Activated CD4-positive, alpha-beta T cell treated with anti-CD3 and anti-CD28 coated beads for 36 hours (primary cell): ENCODE measurements at regions of chr1 and their contacts with region 1.

Region 1: DNA sequence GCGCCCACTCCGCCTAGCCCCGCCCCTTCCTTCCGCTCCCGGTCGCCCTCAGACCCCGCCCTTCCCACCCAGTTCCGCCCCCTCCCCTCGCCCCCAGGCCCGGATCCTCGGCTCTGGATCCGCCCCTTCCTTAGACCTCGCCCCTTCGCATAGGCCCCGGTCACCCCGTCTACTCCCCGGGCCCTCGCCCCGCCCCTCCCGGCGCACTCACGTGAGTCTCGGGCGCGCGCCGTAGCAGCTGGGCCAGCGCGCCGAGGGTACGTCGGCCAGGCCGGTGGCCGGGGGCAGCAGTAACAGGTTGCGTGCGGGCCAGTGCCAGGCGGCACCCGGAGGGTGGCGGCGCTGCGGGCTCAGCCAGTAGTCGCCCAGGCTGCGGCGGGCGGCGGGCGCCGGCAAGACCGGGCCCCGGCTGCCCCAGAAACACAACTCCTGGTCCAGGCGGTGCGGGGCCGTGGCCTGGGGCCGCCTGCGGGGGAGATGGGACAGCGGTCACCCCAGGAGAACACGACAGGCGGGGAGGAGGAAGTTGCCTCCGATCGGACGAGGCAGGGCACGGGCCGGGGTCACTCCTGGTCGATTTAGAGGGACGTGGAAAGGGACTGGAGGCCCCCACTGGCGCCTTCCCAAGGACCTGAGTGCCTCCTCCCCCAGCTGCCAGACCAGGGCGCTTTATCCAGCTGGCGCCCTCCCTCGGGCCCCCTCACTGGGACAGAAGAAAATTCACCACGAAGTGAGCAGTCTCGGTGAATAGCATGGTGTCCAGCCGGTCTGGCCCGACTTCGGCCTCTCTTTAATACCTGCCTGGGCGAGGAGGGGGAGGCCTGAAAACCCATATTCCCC is 10.7 kb downstream of the FAM229A start:
- DNase-seq: peak; percentile 96
- ATAC-seq: peak; percentile 96
- H3K4me3 Mint-ChIP-seq: peak overlapping the region; percentile 73
- H3K27ac Mint-ChIP-seq: peak overlapping the region; percentile 82
- H3K4me1 Mint-ChIP-seq: peaks cover 20% of the 10 kb centered on the region
- H3K27me3 Mint-ChIP-seq: no peaks in the 10 kb centered on the region

Region 2: DNA sequence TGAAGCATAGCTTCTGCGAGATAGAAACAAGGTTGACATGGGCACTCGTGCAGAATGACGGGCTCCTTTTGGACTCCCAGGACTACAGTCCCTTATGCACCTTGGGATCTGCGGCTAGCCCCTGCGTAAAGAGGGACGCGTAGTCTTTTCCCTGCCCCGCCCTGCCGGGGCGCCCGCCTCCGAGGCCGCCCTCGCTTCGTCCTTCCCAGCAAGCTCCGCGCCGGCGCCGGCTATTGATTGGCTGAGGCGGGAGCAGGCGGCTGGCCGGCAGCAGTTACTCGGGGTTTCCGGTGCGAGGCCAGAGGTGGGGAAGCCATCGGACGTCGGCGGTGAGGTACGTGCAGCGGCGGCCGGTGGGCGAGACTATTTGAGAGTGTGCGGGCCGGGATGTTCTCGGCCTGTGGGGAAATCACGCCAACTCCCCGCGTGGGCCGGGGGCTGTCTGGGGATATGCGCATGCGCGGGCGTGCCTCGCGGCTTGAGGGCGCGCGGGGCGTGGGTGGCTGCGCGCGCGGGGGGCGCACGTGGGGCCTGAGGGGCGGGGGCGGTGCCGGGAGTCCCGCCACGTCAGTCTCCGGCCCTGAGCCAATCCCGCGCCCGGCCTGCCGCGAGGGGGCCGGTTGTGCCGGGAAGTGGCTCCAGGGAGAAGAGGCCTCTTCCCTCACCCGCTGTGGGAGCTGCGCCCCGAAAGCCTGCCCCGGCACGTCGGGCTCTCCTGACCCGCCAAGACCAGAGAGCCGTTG is 172.0 kb before region 1 on chr1 and contains the start of gene TXLNA:
- CTCF ChIA-PET with region 1: no interaction called
- POLR2A ChIA-PET with region 1: no interaction called
- intact Hi-C with region 1: loop called in 1 of 2 experiments (anchors 1 kb)
- DNase-seq: peak; percentile 96
- ATAC-seq: peak; percentile 93
- H3K4me3 Mint-ChIP-seq: peak within 1 kb of the TSS; percentile 86
- H3K27ac Mint-ChIP-seq: peak within 1 kb of the TSS; percentile 98
- H3K4me1 Mint-ChIP-seq: peaks cover 44% of the 10 kb centered on the region
- H3K27me3 Mint-ChIP-seq: no peaks in the 10 kb centered on the region
- total RNA-seq, gene TXLNA: 79.5 to 79.7 TPM

Region 3: DNA sequence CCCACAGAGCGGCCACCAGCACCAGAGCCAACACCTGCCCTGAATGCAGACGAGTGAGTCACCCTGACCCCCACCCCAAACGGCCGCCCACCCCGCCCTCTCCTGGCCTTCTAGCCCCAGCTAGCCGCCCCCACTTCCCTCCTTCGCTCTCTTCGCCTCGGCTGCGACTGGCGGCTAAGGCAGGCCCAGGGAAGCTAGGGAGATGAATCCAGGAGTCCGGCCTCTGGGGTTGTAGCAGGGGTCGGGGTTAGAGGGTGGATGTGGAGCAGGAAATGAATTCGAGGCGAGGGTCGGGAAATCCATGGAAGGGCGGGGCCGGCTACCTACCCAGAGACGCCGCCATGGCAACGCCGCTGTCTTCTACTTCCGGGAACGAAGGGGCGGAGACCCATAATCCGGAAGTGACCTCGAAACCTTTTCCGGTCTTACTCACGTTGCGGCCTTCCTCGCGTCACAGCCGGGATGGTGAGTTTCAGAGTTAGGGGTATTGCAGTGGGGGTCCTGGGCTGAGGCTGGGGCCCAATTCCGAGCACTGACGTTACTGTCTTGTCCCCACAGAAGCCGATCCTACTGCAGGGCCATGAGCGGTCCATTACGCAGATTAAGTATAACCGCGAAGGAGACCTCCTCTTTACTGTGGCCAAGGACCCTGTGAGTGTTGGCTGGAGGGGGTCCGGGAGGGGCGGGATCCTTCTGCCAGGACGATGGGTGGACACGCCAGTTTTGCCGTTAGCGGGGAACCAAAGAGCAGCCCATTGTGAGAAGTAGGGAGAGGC is 129.5 kb before region 1 on chr1 and contains the starts of genes EIF3I and TMEM234:
- CTCF ChIA-PET with region 1: no interaction called
- POLR2A ChIA-PET with region 1: no interaction called
- intact Hi-C with region 1: loop called (anchors 1 to 2 kb)
- DNase-seq: peak; percentile 95
- ATAC-seq: peak; percentile 95
- H3K4me3 Mint-ChIP-seq: peak within 1 kb of the TSS; percentile 96
- H3K27ac Mint-ChIP-seq: peak within 1 kb of the TSS; percentile 97
- H3K4me1 Mint-ChIP-seq: peaks cover 29% of the 10 kb centered on the region
- H3K27me3 Mint-ChIP-seq: no peaks in the 10 kb centered on the region
- total RNA-seq, gene EIF3I: 299 to 349 TPM
- total RNA-seq, gene TMEM234: 7.3 to 8.2 TPM

Region 4: GRCh38 chr1:32291708-32292492 is 59.7 kb before region 1 on chr1 and contains the start of gene HDAC1:
- CTCF ChIA-PET with region 1: interaction called, 4 read pairs
- POLR2A ChIA-PET with region 1: no interaction called
- intact Hi-C with region 1: loop called in 1 of 2 experiments (anchors 1 kb)
- DNase-seq: peak; percentile 99
- ATAC-seq: peak; percentile 98
- H3K4me3 Mint-ChIP-seq: peak within 1 kb of the TSS; percentile 100
- H3K27ac Mint-ChIP-seq: peak within 1 kb of the TSS; percentile 99
- H3K4me1 Mint-ChIP-seq: peaks cover 43% of the 10 kb centered on the region
- H3K27me3 Mint-ChIP-seq: no peaks in the 10 kb centered on the region
- total RNA-seq, gene HDAC1: 132 to 146 TPM

Region 5: DNA sequence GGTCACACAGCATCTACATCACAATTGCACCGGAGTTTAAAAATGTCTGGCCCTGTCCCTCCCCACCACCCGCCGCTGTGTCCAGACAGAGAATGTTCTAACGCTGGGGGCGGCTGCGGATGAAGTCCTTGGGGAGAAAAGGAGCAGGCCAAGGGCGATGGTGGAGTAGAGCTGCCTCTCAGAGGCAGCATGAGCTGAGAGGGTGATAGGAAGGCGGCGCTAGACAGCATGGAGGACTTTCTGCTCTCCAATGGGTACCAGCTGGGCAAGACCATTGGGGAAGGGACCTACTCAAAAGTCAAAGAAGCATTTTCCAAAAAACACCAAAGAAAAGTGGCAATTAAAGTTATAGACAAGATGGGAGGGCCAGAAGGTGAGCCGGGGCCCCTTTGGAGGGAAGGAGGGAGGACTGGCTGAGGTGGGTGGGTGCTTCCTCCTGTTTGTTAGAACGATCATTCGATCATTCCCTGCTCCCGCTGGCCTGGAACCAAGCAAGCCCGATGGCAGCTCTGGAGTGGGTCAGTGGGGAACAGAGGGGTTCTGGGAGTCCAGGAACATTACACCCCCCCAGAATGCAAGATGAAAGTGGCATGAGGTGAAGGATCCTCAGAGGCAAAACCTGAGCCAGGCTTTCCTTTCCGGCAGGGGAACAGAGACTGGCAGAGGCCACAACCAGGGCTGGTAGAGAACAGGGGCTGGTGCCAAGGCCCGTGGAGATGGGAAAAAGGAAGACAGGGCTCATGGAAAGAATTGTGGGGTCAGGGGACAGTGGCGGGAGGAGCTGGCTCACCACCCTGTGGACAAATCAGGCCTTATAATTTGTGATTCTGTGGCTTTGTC is 11.1 kb after region 1 on chr1 and contains the starts of genes FAM229A and TSSK3:
- CTCF ChIA-PET with region 1: interaction called, 16 read pairs
- POLR2A ChIA-PET with region 1: no interaction called
- intact Hi-C with region 1: no loop called
- DNase-seq: no peak
- ATAC-seq: no peak
- H3K4me3 Mint-ChIP-seq: no peak within 1 kb of the TSS
- H3K27ac Mint-ChIP-seq: no peak within 1 kb of the TSS
- H3K4me1 Mint-ChIP-seq: peaks cover 18% of the 10 kb centered on the region
- H3K27me3 Mint-ChIP-seq: peaks cover 2% of the 10 kb centered on the region
- total RNA-seq, gene FAM229A: 3.1 to 3.3 TPM
- total RNA-seq, gene TSSK3: 0.76 to 1.6 TPM

Region 6: GRCh38 chr1:32388641-32389040 is 37.0 kb after region 1 on chr1:
- CTCF ChIA-PET with region 1: no interaction called
- POLR2A ChIA-PET with region 1: no interaction called
- intact Hi-C with region 1: no loop called
- DNase-seq: no peak
- ATAC-seq: no peak
- H3K4me3 Mint-ChIP-seq: no peak overlapping the region
- H3K27ac Mint-ChIP-seq: no peak overlapping the region
- H3K4me1 Mint-ChIP-seq: peaks cover 25% of the 10 kb centered on the region
- H3K27me3 Mint-ChIP-seq: no peaks in the 10 kb centered on the region

Region 7: GRCh38 chr1:32400876-32401631 is 49.4 kb after region 1 on chr1:
- CTCF ChIA-PET with region 1: no interaction called
- POLR2A ChIA-PET with region 1: no interaction called
- intact Hi-C with region 1: no loop called
- DNase-seq: peak; percentile 77
- ATAC-seq: peak; percentile 85
- H3K4me3 Mint-ChIP-seq: no peak overlapping the region
- H3K27ac Mint-ChIP-seq: no peak overlapping the region
- H3K4me1 Mint-ChIP-seq: peaks cover 2% of the 10 kb centered on the region
- H3K27me3 Mint-ChIP-seq: no peaks in the 10 kb centered on the region

Region 8: GRCh38 chr1:32448773-32449456 is 97.3 kb after region 1 on chr1:
- CTCF ChIA-PET with region 1: no interaction called
- POLR2A ChIA-PET with region 1: no interaction called
- intact Hi-C with region 1: no loop called
- DNase-seq: peak; percentile 37
- ATAC-seq: no peak
- H3K4me3 Mint-ChIP-seq: no peak overlapping the region
- H3K27ac Mint-ChIP-seq: no peak overlapping the region
- H3K4me1 Mint-ChIP-seq: no peaks in the 10 kb centered on the region
- H3K27me3 Mint-ChIP-seq: peaks cover 12% of the 10 kb centered on the region